Psoas muscle (tissue), 8 donors: ENCODE measurements at regions of chr2 and their contacts with region 1.

Region 1: DNA sequence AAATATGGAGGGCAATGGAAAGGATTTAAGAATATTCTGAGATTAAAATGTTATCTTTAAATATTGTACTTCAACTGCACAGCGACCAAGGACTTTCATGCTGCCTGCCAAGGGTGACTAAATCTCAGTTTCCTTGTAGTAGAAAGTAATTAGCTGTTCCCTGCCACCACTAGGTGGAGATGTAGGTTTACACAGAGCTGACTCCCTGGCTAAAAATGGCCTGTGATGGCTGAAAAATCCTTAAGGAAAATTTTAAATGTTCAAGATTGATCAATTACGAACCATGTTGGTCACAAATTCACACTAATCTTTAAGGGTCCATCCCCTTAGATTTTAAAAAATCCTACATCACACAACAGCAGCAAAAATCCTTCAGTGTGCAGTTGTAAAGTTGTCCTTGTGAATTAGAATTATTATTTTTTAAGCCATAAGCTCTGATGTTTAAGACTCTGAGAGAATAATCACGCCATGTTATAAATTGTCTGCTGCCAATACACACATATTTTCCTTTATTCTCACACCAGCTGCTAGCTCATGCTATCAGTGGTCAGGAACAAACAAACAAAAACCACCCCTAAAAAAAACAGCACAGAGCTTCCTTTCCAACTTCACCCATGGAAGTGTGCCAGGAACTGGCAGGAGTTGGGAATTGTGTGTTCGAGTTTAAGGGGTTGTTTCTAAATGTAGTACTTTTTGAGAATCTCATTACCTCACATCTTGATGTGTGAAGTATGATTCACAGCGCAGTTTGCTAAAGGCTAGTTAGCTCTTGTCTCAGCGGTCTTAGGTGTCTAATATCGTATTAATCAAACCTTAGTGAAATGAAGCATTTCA is 399.8 kb downstream of the TMEM182 start:
- DNase-seq: no peak
- ATAC-seq: no peak
- H3K4me3 ChIP-seq: no peak overlapping the region
- H3K27ac ChIP-seq: no peak overlapping the region
- H3K4me1 ChIP-seq: no peaks in the 10 kb centered on the region
- H3K27me3 ChIP-seq: peaks cover 0 to 5% (median 0%) of the 10 kb centered on the region in 3 donors
- CTCF ChIP-seq: peak; percentile 55

Region 2: GRCh38 chr2:102975996-102976975 is 185.4 kb before region 1 on chr2:
- intact Hi-C with region 1: loop called in 1 of 2 experiments (anchors 5 kb)
- DNase-seq: no peak
- ATAC-seq: peak; percentile 64 to 93 (median 80)
- H3K4me3 ChIP-seq: no peak overlapping the region
- H3K27ac ChIP-seq: no peak overlapping the region
- H3K4me1 ChIP-seq: peaks cover 9% of the 10 kb centered on the region
- H3K27me3 ChIP-seq: no peaks in the 10 kb centered on the region
- CTCF ChIP-seq: peak; percentile 61

Region 3: DNA sequence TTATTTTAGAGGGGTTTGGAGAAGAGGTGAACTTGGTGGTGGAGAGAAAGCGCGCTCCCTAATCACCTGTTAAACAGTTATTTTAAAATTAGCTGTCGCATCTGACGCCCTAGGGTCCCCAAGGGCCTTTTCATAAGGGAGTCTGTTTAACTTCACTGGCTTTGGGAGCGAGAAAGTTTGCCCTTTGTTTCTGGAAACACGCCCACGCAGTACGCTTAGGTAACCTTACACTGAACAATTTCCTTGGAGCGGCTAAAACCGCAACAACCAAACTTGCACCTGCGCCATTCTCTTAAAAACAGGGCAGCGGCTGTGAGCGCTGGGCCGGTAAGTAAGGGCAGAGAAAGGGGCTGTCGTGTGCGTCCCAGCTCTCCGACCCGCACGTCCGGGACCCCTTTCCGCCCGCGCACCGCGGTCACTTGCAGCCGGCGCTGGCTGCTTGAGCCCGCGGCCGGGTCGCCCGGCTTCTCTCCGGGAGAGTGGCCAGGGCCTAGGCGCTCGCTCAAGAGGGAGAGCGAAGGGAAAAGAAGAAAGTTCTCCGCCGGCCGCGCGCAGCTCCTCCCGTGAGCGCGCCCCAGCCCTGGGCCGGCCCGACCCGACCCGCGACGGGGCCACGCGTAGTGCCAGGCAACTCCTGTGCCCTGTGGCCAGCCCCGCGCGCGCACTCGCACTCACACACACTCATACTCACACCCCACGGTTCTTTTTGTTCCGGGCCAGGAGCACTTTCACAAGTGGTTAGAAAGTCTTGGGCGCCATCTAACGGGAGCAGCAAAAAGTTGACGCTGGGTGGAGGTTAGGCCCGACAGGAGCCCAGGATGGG is 1711.4 kb after region 1 on chr2:
- intact Hi-C with region 1: loop called (anchors 10 kb)
- DNase-seq: no peak
- ATAC-seq: peak; percentile 74 to 95 (median 90)
- H3K4me3 ChIP-seq: peak overlapping the region; percentile 75
- H3K27ac ChIP-seq: no peak overlapping the region
- H3K4me1 ChIP-seq: peaks cover 4% of the 10 kb centered on the region
- H3K27me3 ChIP-seq: peaks cover 0 to 55% (median 24%) of the 10 kb centered on the region in 3 donors
- CTCF ChIP-seq: peak; percentile 53